Heart right ventricle (tissue), 16 donors: ENCODE measurements at regions of chr1 and their contacts with region 1.

Region 1: DNA sequence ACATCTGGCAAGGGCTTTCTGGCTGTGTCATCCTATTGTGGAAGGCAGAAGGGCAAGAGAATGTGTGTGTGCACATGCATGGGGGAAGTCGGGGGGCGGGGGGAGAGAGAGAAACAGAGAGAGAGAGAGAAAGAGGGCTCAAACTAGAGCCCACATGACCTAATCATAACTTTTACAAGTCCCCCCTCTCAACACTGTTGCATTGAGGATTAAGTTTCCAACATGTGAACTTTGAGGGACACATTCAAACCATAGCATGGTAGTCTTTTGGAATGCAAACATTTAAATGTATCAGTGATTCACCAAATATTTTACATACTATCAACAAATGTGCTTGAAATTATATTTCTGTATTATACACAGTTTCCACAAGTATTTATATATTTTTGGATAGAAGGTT is 655.4 kb upstream of the B3GALT2 start:
- DNase-seq: no peak
- ATAC-seq: no peak
- H3K4me3 ChIP-seq: no peak overlapping the region
- H3K27ac ChIP-seq: no peak overlapping the region
- H3K4me1 ChIP-seq: no peaks in the 10 kb centered on the region
- H3K27me3 ChIP-seq: no peaks in the 10 kb centered on the region
- CTCF ChIP-seq: no peak

Region 2: GRCh38 chr1:193868425-193868824 is 26.6 kb after region 1 on chr1:
- intact Hi-C with region 1: loop called in 1 of 10 experiments (anchors 1 kb)
- DNase-seq: no peak
- ATAC-seq: no peak
- H3K4me3 ChIP-seq: no peak overlapping the region
- H3K27ac ChIP-seq: no peak overlapping the region
- H3K4me1 ChIP-seq: no peaks in the 10 kb centered on the region
- H3K27me3 ChIP-seq: no peaks in the 10 kb centered on the region
- CTCF ChIP-seq: no peak